HepG2 (cell line): ENCODE measurements at regions of chr10 and their contacts with region 1.

Region 1: GRCh38 chr10:47384148-47384921 is at the start of gene ZNF488:
- DNase-seq: peak; percentile 49
- ATAC-seq: peak; percentile 94
- H3K4me3 ChIP-seq: peak within 1 kb of the TSS; percentile 58 to 76 (median 66)
- H3K27ac ChIP-seq: no peak within 1 kb of the TSS
- H3K4me1 ChIP-seq: peaks cover 32% of the 10 kb centered on the region
- H3K27me3 ChIP-seq: peaks cover 3 to 20% of the 10 kb centered on the region in 2 experiments
- CTCF ChIP-seq: no peak; the same call in 1 of the 2 replicates
- EP300 ChIP-seq: no peak
- POLR2A ChIP-seq: no peak; a peak in 1 of 4 replicates
- RAD21 ChIP-seq: no peak
- total RNA-seq, gene ZNF488: 0.13 and 0.17 TPM in 2 replicates

Region 2: GRCh38 chr10:46106410-46107255 is 1277.7 kb before region 1 on chr10:
- CTCF ChIA-PET with region 1: no interaction called
- POLR2A ChIA-PET with region 1: no interaction called
- in situ Hi-C with region 1: loop called (anchors 10 kb)
- intact Hi-C with region 1: no loop called
- DNase-seq: peak; percentile 73
- ATAC-seq: peak; percentile 97
- H3K4me3 ChIP-seq: peak overlapping the region; percentile 66 to 78 (median 75)
- H3K27ac ChIP-seq: no peak overlapping the region
- H3K4me1 ChIP-seq: peaks cover 46% of the 10 kb centered on the region
- H3K27me3 ChIP-seq: peaks cover 0 to 8% of the 10 kb centered on the region in 2 experiments; a peak in 3 of 5 replicates
- CTCF ChIP-seq: peak; percentile 33; the same call in 1 of the 2 replicates
- EP300 ChIP-seq: no peak
- POLR2A ChIP-seq: peak in 1 of 2 experiments; percentile 52; a peak in 1 of 4 replicates
- RAD21 ChIP-seq: no peak; the same call in 1 of the 2 replicates

Region 3: DNA sequence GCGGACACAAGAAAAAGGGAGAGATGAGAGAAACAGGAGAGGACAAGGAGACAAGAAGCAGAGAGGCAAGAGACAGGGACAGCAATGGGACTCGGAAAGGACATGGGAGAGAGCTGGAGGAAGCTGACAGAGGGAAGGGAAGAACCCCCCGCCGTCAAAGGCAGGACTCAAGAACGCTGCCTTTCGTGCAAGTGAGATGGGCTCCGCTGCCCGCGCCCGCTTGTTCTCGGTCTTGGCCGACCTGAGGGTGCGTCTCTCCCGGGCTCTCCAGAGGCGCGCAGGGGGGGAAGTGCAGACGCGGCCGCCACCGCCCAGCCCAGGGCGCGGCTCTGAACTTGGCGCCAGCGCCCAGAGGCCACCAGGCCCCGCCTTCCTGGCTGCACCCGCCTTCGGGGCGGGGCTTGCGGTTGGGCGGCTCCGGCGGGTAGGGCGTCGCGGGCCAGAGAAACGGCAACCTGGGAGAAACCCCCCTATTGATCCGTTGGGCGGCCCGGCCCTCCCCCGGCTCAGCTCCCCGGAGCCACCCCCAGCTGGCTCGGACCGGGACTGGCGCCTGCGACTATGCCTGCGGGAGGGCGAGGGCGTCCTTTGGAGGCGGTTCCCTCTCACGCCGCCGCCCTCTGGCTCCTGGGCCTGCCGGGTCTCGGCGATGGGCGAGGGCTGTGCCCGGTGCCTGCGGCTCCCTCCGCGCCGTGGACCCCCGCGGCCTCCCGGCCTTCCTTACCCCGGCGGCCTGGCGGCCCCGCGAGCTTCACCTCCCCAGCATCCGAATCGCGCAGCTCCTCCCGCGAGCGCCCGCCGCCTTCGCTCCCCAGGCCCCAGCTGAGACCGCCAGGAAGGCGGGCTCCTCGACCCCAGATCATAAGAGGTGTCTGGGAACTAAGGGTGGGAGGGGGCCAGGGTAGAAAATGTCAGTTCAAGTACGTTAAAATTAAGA is 1099.8 kb before region 1 on chr10:
- CTCF ChIA-PET with region 1: no interaction called
- POLR2A ChIA-PET with region 1: no interaction called
- in situ Hi-C with region 1: loop called (anchors 5 kb)
- intact Hi-C with region 1: no loop called
- DNase-seq: peak; percentile 31
- ATAC-seq: peak; percentile 91
- H3K4me3 ChIP-seq: peak overlapping the region; percentile 44 to 71 (median 53)
- H3K27ac ChIP-seq: no peak overlapping the region
- H3K4me1 ChIP-seq: no peaks in the 10 kb centered on the region
- H3K27me3 ChIP-seq: peaks cover 4 to 71% of the 10 kb centered on the region in 2 experiments; a peak in 4 of 5 replicates
- CTCF ChIP-seq: no peak
- EP300 ChIP-seq: no peak
- POLR2A ChIP-seq: no peak
- RAD21 ChIP-seq: 0 out of 2 replicates have a peak, but pooled peaks have one; percentile 11